Activated naive CD4-positive, alpha-beta T cell treated with anti-CD3 and anti-CD28 coated beads for 36 hours (primary cell): ENCODE measurements at regions of chr11 and their contacts with region 1.

Region 1: DNA sequence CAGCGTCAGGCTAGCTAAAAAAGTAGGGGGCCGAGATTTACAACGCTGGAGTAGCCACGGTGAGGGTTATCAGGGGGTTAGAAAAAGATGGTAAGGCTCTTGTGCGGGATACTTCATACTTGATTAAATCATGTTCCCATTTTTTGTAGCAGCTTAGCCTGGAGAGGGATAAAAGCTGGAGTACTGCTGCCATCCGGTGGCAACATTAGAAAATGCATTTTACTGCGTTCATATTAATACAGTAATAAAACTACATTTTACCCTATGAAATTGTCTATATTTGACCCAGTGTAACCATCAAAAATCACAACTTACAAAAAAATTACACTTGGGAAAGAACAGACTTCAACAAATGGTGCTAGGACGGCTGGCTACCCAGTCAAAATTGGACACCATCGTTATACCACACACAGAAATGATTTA is 17.3 kb downstream of the RPUSD4 start:
- DNase-seq: peak; percentile 63
- H3K4me3 Mint-ChIP-seq: no peak overlapping the region
- H3K27ac Mint-ChIP-seq: no peak overlapping the region
- H3K4me1 Mint-ChIP-seq: no peaks in the 10 kb centered on the region
- H3K27me3 Mint-ChIP-seq: no peaks in the 10 kb centered on the region

Region 2: DNA sequence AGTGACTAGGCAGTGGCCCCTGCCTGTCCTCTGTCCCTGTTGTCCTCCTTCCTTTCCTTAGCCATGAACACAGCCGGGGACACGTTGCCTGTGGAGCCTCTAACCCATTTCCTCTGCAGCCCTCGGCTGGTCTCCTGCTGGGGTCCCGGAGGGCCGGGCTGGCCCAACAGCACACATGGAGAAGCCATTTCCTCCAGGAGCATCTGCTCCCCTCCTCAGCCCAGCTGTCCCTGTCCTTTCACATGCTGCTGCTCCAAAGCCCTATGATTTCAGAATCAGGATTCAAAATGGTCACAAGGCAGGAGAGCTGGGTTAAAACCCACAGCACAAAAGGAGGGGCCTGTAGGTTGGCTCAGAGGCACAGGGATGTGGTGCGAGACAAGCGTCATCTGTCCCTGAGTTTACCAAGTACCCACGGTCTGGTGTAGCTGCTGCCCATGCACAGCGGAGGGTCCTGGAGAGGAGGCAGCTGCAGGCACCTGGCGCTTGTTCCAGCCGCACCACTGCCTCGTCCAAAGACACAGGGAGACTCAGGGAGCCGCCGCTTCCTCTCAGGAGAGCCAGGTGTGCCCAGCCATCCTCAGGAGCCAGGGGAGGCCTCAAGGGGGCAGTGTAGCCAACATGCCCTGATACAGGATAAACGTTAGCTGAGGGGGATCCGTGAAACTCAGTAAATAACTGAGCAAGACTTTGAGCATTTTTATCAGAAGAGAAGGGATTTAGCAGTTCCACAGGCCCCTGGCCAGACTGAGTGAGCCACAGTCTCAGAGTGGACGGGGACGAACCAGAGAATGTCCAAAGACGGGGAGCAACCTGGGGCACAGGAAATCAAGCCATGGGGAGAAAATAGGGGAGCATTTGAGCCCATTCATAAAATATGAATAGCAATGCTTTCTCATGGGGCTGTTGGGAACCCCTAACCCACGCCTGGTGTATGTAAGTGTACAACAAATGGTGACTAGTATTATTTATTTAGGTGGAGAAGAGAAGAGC is 252.2 kb before region 1 on chr11:
- CTCF ChIA-PET with region 1: interaction called, 24 read pairs
- intact Hi-C with region 1: loop called (anchors 1 kb)
- DNase-seq: peak; percentile 79
- H3K4me3 Mint-ChIP-seq: no peak overlapping the region
- H3K27ac Mint-ChIP-seq: no peak overlapping the region
- H3K4me1 Mint-ChIP-seq: peaks cover 15% of the 10 kb centered on the region
- H3K27me3 Mint-ChIP-seq: no peaks in the 10 kb centered on the region

Region 3: DNA sequence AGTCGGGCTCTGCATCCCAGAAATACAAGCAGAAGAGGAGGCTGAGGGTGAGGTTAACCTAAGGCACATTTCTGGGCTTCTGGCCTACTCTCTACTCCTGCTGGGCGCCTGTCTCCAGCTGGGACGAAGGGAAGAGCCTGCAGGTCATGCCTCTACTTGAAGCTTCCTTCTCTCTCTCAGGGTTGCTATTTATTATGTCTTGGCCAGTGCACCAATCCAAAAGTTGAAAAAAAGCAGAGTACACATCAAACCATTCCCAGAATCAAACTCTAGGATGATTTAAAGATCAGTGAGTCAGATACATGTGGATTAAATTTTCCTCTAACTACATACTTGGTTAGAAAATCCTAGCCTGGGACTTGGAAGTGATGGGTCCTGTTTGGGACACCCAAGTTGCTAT is 71.3 kb before region 1 on chr11:
- CTCF ChIA-PET with region 1: no interaction called
- intact Hi-C with region 1: loop called (anchors 5 kb)
- DNase-seq: no peak
- H3K4me3 Mint-ChIP-seq: no peak overlapping the region
- H3K27ac Mint-ChIP-seq: no peak overlapping the region
- H3K4me1 Mint-ChIP-seq: no peaks in the 10 kb centered on the region
- H3K27me3 Mint-ChIP-seq: no peaks in the 10 kb centered on the region

Region 4: GRCh38 chr11:127191689-127192088 is 997.6 kb after region 1 on chr11:
- CTCF ChIA-PET with region 1: no interaction called
- intact Hi-C with region 1: no loop called
- DNase-seq: no peak
- H3K4me3 Mint-ChIP-seq: no peak overlapping the region
- H3K27ac Mint-ChIP-seq: no peak overlapping the region
- H3K4me1 Mint-ChIP-seq: no peaks in the 10 kb centered on the region
- H3K27me3 Mint-ChIP-seq: peaks cover 4% of the 10 kb centered on the region